Activated naive CD4-positive, alpha-beta T cell treated with anti-CD3 and anti-CD28 coated beads for 36 hours (primary cell): ENCODE measurements at regions of chr7 and their contacts with region 1.

Region 1: GRCh38 chr7:150876817-150877526 is 24.7 kb downstream of the AOC1 start:
- DNase-seq: peak; percentile 64
- H3K4me3 Mint-ChIP-seq: peak overlapping the region; percentile 48
- H3K27ac Mint-ChIP-seq: no peak overlapping the region
- H3K4me1 Mint-ChIP-seq: peaks cover 9% of the 10 kb centered on the region
- H3K27me3 Mint-ChIP-seq: no peaks in the 10 kb centered on the region

Region 2: DNA sequence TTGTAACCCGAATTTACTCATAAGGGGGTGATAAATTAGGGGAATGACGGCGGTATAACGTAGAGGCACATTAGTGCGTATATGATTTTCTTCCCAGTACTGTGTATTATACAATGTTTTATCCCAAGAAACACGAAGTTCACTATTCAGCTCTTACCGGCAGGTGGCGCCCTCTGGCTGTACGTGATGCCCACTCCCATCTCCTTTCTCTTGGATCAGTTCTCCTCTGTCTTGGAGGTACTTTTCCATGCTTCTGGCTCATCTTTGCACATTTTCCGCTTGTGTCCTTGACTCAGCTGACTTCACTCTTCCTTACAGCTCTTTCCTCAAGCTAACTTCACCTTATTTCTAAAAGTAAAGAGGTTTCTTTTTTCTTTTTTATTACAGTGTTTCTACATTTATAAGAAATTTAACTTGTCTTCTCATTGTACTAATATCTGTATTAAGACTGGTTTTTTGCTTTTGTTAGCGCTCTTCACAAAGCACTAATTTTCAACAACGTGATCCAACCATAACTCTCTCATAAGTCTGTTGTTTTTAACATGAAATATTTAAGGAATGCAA is 98.2 kb before region 1 on chr7:
- CTCF ChIA-PET with region 1: interaction called, 8 read pairs
- intact Hi-C with region 1: loop called (anchors 1 kb)
- DNase-seq: peak; percentile 87
- H3K4me3 Mint-ChIP-seq: no peak overlapping the region
- H3K27ac Mint-ChIP-seq: no peak overlapping the region
- H3K4me1 Mint-ChIP-seq: peaks cover 4% of the 10 kb centered on the region
- H3K27me3 Mint-ChIP-seq: peaks cover 3% of the 10 kb centered on the region

Region 3: DNA sequence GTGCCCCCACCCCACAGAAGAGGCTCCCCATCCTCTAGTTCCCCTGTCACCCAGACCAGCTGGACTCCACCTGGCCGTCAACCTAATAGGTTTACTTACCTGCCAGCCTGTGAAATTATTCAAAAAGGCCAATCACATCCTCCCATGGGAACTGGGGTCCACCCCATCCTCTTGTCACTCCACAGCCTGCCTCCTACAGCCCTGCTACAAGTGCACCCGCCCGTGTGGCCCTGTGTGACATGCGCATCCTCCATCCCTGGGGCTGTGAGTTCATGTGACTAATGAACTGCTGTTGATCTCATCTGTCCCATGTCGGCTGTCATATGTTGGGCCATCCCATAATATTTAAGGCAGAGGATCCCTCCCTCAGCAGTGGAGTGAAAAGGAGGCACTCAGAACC is 14.8 kb after region 1 on chr7:
- CTCF ChIA-PET with region 1: interaction called, 12 read pairs
- intact Hi-C with region 1: no loop called
- DNase-seq: no peak
- H3K4me3 Mint-ChIP-seq: no peak overlapping the region
- H3K27ac Mint-ChIP-seq: no peak overlapping the region
- H3K4me1 Mint-ChIP-seq: no peaks in the 10 kb centered on the region
- H3K27me3 Mint-ChIP-seq: peaks cover 3% of the 10 kb centered on the region